Common myeloid progenitor, CD34-positive (primary cell): ENCODE measurements at regions of chr10 and their contacts with region 1.

Region 1: DNA sequence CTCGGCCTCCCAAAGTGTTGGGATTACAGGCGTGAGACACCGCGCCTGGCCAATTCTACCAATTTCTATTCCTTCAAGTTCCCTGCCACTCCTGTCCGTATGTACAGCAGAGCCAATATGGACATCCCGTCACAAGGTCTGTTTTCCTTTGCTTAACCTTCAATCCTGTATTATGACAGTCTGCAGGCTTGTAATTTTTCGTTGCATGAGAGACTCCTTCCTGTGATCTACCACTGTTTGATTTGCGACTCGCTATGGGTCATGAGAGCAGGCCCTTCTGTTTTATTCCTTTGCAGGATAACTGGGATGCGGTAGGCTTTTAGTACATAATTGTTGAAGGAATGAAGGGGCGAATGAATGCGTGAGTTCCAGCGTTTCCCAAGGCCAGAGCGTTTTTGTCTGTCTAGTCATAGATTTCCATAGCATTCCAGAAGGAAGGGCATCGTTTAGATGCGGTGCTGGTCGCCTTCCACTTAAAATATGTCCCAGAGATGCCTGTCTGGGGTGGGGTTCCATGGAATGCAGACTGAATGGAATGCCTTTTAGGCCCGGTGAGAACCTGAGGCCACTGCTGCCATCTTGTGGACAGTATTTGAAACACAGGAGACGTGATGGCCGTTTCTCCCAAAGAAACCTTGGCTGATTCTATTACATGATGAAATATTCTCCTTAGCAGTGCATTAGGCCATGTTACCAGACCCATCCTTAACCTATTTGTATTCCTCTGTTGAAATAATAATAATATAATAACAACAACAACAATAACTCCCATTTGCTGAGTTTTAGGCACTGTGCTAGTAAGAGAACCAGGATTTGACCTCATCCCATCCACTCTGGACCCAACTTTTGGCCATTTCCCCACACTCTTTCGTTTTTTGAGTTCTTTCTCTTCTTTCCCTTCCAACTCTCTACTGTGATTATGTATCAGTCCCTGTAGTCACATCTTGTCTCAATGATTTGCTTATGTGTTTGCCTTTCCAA is 193.2 kb downstream of the MYOF start:
- DNase-seq: peak; percentile 52 to 71 (median 61)
- H3K4me3 ChIP-seq: no peak overlapping the region
- H3K27ac ChIP-seq: no peak overlapping the region
- H3K4me1 ChIP-seq: peaks cover 0 to 11% (median 6%) of the 10 kb centered on the region in 4 experiments
- H3K27me3 ChIP-seq: no peaks in the 10 kb centered on the region

Region 2: DNA sequence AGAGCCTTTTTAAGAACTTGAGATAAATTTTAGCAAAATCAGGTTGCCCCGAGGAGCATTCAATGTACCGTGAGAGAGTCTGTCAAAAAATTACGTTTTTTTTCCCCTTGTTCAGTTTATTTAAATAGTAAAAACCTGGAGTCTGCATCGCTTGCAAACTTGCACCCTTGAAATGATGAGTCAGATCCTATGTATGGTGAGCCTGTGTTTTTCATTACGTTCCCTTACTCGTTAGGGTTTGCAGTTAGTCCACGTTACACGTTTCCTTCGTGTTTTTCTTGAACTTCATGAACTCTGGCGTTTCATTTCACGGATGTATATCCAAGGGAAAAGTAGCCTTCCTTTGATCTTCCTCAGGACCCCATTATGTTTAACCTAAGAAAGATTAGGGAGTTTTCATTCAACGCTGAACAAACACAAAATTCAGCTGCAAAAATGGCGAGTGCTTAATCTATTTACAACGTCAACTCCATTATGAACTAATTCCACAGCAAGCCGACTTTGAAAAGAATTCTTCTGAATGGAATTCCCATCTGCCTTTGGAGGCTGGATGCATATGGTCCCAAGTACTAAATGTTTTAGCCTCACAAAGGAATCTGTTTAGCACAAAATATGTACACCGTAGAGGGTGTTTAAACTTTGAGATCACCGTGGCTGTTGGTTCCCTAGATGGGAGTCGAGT is 10.8 kb after region 1 on chr10:
- CTCF ChIA-PET with region 1: interaction called, 10 read pairs
- POLR2A ChIA-PET with region 1: no interaction called
- DNase-seq: no peak
- H3K4me3 ChIP-seq: no peak overlapping the region
- H3K27ac ChIP-seq: no peak overlapping the region
- H3K4me1 ChIP-seq: no peaks in the 10 kb centered on the region
- H3K27me3 ChIP-seq: peaks cover 0 to 3% (median 0%) of the 10 kb centered on the region in 5 experiments